ENCODE measurements at regions of chr6 and their contacts with region 1.

Region 1: GRCh38 chr6:89117211-89118108 is at the start of gene SRSF12:
- DNase-seq: peak in 8 of 10 donors; percentile 13 to 87 (median 31)

Region 2: GRCh38 chr6:88311561-88311960 is 805.9 kb before region 1 on chr6:
- intact Hi-C with region 1: no loop called
- DNase-seq: no peak

Region 3: GRCh38 chr6:89242574-89243330 is 125.3 kb after region 1 on chr6:
- intact Hi-C with region 1: loop called (anchors 5 kb)
- DNase-seq: no peak